ENCODE measurements at regions of chr19 and their contacts with region 1.

Region 1: DNA sequence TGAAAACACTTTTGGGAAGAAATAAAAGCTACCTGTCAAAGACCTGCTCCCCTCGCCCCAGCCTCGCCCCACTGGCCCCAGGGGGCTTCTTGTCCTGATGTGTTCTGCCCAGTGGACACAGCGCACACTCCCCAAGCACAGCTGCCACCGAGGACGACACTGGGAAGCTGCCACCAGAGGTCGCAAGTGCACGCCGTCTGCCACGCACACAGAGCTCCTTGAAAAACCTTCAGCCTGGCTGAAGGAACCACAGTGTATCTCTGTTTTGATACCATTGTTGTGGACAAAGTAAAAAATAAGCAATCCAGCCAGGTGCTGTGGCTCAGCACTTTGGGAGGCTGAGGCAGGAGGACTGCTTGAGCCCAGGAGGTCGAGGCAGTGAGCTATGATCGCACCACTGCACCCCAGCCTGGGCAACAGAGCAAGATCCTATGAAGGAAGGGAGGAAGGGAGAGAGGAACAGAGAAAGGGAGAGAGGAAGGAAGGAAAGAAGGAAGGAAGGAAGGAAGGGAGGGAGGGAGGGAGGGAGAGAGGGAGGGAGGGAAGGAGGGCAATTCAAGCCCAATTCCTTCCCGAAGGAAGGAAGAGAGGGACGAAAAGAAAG is 57.3 kb downstream of the CEBPG start:
- DNase-seq: peak in 1 of 2 donors; percentile 80
- ATAC-seq: peak; percentile 94

Region 2: DNA sequence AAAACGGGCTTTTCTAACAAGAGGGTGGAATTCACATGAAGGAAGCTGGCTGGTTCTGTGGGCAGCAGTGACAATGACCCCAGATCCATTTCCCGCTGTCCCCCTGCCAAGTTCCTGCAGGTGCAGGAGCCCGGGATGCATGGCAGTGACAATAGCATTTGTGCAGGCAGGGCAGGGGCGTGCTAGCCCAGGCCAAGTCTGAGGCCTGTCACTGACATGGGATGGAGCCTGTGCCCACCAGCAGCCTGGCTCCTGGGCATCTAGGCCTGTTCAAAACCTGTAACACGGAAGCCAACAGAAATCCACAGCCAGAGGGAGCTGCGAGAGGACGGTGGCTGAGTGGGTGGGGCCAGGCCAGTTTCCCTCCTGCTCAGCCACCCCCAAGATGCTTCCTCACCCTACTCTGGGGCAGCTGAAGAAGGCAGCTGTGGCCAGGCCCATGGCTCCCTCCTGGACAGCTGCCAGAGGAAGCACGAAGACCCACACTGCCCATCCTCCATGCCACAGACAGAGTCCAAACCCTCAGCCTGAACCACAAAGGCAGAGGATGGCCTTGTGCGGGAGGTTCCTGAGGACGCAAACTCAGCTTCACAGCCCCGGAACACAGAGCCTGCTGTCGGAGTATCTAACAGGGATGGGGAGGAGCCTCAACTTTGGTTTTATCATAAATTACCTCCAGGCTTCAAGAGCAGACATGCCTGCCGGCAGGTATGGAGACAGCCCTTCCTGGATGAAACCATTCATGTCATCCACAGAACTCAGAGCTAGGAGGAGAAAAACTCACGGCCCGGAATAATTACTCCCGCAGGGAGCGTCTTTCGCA is 16.8 kb after region 1 on chr19:
- intact Hi-C with region 1: no loop called
- DNase-seq: no peak
- ATAC-seq: no peak

Region 3: DNA sequence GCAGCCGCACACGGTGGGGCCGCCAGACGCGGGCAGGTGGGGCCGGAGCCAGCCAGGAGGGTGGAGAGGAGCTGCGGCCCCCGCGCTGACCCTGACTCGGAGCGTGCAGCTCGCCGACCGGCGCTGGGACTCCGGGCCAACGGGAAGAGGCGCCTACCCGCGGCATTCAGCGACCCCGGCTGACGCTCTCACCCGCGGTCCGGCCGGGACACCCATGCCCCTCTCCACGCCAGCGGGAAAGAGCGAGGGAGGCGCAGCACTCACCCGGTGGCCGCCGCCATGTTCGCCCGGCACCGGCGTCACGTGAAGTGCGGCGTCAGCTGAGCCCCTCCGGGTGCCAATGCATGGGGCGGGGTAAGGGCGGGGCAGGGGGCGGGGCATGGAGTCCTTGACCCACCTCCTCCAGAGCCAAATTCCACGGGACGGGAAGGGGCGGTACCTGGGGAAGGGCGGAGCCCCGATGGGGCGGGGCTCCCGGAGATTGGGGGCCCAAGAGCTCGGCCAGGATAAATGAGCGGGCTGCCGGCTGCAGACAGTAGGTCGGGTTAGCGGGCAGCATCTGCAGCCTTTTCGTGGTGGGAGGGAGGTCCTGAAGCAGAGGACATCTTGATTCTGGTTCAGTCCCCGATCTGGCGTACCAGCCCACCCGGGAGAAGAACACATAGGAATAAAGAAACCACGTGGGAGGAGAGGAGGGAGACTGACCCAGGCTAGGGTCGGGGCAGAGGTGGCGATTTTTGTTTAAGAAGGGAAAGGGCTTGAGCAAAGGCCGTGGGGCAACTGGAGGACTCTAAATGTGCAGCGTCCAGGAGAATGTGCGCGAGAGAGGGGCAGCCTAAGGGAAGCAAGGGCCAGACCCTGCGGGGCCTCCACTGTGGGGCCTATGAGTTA is 90.9 kb after region 1 on chr19 and contains the start of gene PEPD:
- intact Hi-C with region 1: no loop called
- DNase-seq: peak; percentile 84 to 90
- ATAC-seq: peak; percentile 92
- total RNA-seq, gene PEPD: 35.7 to 86.1 TPM

Region 4: GRCh38 chr19:33771384-33772101 is 340.8 kb after region 1 on chr19:
- intact Hi-C with region 1: loop called (anchors 5 kb)
- DNase-seq: peak; percentile 53 to 77
- ATAC-seq: peak; percentile 86